SK-N-SH (cell line): ENCODE measurements at regions of chr12 and their contacts with region 1.

Region 1: GRCh38 chr12:122526683-122527477 is at the starts of genes KNTC1 and RSRC2:
- DNase-seq: peak; percentile 91
- H3K4me3 ChIP-seq: peak within 1 kb of the TSS; percentile 85 to 100
- H3K27ac ChIP-seq: peak within 1 kb of the TSS; percentile 99
- H3K4me1 ChIP-seq: peaks cover 14 to 18% of the 10 kb centered on the region in 2 experiments; a peak in 3 of 4 replicates
- H3K27me3 ChIP-seq: no peaks in the 10 kb centered on the region
- CTCF ChIP-seq: no peak
- EP300 ChIP-seq: 0 out of 4 replicates have a peak, but pooled peaks have one; percentile 21 to 30
- RAD21 ChIP-seq: no peak
- polyA plus RNA-seq, gene KNTC1: 13.2 and 17.2 TPM in 2 replicates
- polyA plus RNA-seq, gene RSRC2: 24.8 and 25.3 TPM in 2 replicates

Region 2: GRCh38 chr12:122500685-122501488 is 26.0 kb before region 1 on chr12 and contains the start of gene ZCCHC8:
- CTCF ChIA-PET with region 1: no interaction called
- POLR2A ChIA-PET with region 1: interaction called, 22 read pairs
- DNase-seq: peak; percentile 92
- H3K4me3 ChIP-seq: peak within 1 kb of the TSS; percentile 63 to 88
- H3K27ac ChIP-seq: peak within 1 kb of the TSS; percentile 92 to 99
- H3K4me1 ChIP-seq: peaks cover 0 to 11% of the 10 kb centered on the region in 2 experiments; a peak in 2 of 4 replicates
- H3K27me3 ChIP-seq: no peaks in the 10 kb centered on the region
- CTCF ChIP-seq: no peak; the same call in 1 of the 2 replicates
- EP300 ChIP-seq: 0 out of 4 replicates have a peak, but pooled peaks of 1 of the 2 experiments have one; percentile 18
- RAD21 ChIP-seq: no peak
- polyA plus RNA-seq, gene ZCCHC8: 11.3 and 14.0 TPM in 2 replicates

Region 3: DNA sequence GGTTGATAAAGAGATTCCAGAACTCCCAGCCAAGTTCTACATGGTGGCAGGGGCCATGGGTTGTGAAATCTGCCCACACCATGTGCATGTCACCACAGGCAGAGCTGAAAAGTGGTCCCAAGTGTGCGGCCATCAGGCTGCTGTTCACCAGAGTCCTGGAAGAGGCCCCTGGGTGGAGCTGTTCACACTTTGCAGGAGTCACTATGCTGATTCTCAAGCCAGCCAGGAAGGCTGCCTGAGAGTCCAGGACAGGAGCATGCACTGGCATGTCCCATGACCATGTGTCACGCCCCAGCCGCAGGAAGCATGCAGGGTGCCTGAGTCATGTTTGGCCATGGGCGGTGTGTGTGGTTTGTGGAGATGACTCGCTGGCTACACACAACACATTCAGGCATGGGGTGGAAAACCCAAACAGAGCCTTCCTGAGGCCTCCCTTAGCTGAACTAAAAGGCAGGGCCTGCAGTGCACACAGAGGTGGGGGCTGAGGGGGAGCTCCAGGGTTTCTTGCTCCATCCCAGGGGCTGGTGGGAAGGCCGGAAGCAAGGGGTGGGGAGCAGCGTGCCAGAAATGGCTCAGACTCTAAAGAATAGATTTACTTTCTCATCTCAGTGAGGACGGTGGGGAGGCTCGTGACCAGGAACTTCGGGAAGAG is 419.9 kb after region 1 on chr12:
- CTCF ChIA-PET with region 1: no interaction called
- POLR2A ChIA-PET with region 1: no interaction called
- DNase-seq: no peak
- H3K4me3 ChIP-seq: no peak overlapping the region
- H3K27ac ChIP-seq: peak overlapping the region; percentile 0 to 89; a peak in 2 of 4 replicates
- H3K4me1 ChIP-seq: peaks cover 0 to 37% of the 10 kb centered on the region in 2 experiments; a peak in 2 of 4 replicates
- H3K27me3 ChIP-seq: no peaks in the 10 kb centered on the region
- CTCF ChIP-seq: peak; percentile 56
- EP300 ChIP-seq: peak in 1 of 2 experiments; percentile 54; a peak in 1 of 4 replicates
- RAD21 ChIP-seq: no peak